ENCODE measurements at regions of chr11 and their contacts with region 1.

Region 1: GRCh38 chr11:68825571-68825970 is 16.1 kb downstream of the CPT1A start:
- DNase-seq: peak; percentile 92 to 98 (median 97)
- H3K4me3 ChIP-seq: peak overlapping the region in 2 of 7 experiments; percentile 32 to 40
- H3K27ac ChIP-seq: peak overlapping the region; percentile 68 to 93
- H3K4me1 ChIP-seq: peaks cover 8 to 68% (median 64%) of the 10 kb centered on the region in 4 experiments
- H3K27me3 ChIP-seq: no peaks in the 10 kb centered on the region

Region 2: DNA sequence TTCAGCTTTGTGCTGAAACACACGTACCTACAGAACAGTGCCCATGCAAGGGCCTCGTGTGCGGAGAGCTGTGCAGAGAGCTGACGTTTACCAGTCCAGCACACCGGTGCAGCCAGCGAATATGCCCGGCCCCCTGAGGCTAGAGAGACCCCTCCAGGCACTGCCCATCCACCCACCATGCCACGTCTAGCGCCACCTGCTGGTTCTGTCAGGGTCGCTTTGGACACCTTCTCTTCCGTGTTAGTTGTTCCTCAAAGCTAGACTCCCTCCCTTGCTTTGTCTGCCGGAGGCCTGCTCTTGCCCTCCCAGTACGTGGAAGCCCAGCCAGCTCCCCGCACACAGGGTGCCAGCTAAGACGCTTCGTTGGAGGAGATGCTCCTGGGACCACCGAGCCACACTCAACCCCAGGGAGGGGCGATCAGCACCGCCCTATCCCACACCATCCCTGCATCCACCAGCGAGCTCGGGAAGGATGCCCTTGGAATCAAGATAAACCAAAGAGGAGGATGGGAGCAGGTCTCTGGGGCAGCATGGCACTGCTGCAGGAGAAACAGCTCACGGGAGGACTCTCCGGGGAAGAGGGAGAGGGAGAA is 27.3 kb before region 1 on chr11:
- CTCF ChIA-PET with region 1: interaction called, 10 read pairs
- POLR2A ChIA-PET with region 1: no interaction called
- DNase-seq: peak; percentile 29 to 57 (median 49)
- H3K4me3 ChIP-seq: no peak overlapping the region
- H3K27ac ChIP-seq: no peak overlapping the region
- H3K4me1 ChIP-seq: peaks cover 0 to 5% (median 2%) of the 10 kb centered on the region in 4 experiments
- H3K27me3 ChIP-seq: no peaks in the 10 kb centered on the region

Region 3: GRCh38 chr11:68854273-68854958 is 28.8 kb after region 1 on chr11:
- CTCF ChIA-PET with region 1: no interaction called
- POLR2A ChIA-PET with region 1: no interaction called
- DNase-seq: no peak
- H3K4me3 ChIP-seq: peak overlapping the region in 6 of 7 experiments; percentile 57 to 86 (median 79)
- H3K27ac ChIP-seq: no peak overlapping the region
- H3K4me1 ChIP-seq: peaks cover 0 to 17% (median 15%) of the 10 kb centered on the region in 4 experiments
- H3K27me3 ChIP-seq: peaks cover 0 to 7% (median 0%) of the 10 kb centered on the region in 5 experiments

Region 4: GRCh38 chr11:68869251-68869960 is 43.8 kb after region 1 on chr11:
- CTCF ChIA-PET with region 1: interaction called, 13 read pairs
- POLR2A ChIA-PET with region 1: interaction called, 3 read pairs
- DNase-seq: peak; percentile 69 to 77 (median 75)
- H3K4me3 ChIP-seq: peak overlapping the region in 6 of 7 experiments; percentile 62 to 89 (median 70)
- H3K27ac ChIP-seq: no peak overlapping the region
- H3K4me1 ChIP-seq: peaks cover 0 to 24% (median 16%) of the 10 kb centered on the region in 4 experiments
- H3K27me3 ChIP-seq: no peaks in the 10 kb centered on the region